OCI-LY7 (cell line): ENCODE measurements at regions of chr11 and their contacts with region 1.

Region 1: GRCh38 chr11:82775736-82776346 is 42.2 kb upstream of the FAM181B start:
- DNase-seq: peak; percentile 51
- H3K4me3 ChIP-seq: no peak overlapping the region
- H3K27ac ChIP-seq: no peak overlapping the region
- H3K4me1 ChIP-seq: no peaks in the 10 kb centered on the region
- CTCF ChIP-seq: peak; percentile 86

Region 2: DNA sequence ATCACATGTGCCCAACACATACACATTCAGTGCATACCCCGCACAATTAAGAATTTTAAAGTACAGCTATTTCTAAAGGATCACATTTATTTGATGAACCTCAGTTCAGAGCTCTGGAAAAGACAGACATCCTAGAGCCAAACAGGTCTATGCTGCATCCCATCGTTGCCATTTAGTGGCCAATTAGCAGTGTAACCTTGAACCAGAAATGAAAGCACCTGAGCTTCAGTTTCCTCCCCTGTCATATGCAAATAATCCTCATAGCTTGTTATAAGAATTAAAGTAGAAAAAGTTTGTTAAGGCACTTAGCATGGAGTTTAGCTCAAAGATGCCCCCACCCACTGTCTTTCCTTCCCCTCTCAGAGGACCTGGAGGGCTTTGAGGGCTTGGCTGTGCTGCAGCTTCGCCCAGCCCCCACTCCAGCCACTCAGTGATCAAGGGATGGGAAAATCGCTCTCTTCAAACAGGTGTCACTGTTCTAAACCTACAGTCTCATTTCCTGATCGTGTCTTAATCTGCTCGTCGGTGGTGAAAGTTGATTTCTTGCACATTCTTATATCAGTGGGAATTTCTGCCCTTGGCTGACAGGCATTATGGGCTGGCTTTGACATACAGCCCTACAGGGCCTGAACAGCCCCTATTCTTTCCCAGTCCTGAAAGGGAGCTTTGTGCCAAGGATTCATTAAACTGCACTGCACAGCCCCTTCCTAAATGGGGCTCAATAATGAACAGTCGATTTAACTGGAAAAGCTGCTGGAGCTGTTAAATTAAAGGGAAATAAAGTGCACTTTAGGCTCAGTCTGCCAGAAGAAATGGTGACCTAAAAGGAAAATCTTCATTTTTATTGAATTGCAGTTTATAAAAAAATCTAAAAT is 18.8 kb before region 1 on chr11:
- CTCF ChIA-PET with region 1: no interaction called
- POLR2A ChIA-PET with region 1: no interaction called
- intact Hi-C with region 1: no loop called
- DNase-seq: peak; percentile 3
- H3K4me3 ChIP-seq: no peak overlapping the region
- H3K27ac ChIP-seq: no peak overlapping the region
- H3K4me1 ChIP-seq: peaks cover 8% of the 10 kb centered on the region
- CTCF ChIP-seq: no peak

Region 3: DNA sequence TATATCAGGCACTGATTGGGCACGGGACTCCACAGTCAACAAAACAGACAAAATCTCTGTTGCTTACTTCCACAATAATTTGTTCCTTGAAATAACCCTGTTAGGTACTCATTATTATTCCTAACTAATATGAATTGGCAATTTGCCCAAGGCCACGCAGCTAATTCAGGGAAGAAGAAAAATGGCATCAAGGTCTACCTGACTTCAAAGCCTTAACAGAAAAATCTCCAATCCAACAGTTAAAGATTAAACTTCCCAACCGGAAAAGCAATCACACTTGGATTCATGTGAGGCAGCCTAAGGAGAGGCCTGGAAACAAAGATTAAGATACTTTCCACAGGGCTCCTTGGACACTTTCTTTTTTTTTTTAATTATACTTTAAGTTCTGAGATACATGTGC is 55.5 kb after region 1 on chr11:
- CTCF ChIA-PET with region 1: no interaction called
- POLR2A ChIA-PET with region 1: no interaction called
- intact Hi-C with region 1: loop called (anchors 5 kb)
- DNase-seq: no peak
- H3K4me3 ChIP-seq: no peak overlapping the region
- H3K27ac ChIP-seq: no peak overlapping the region
- H3K4me1 ChIP-seq: no peaks in the 10 kb centered on the region
- CTCF ChIP-seq: no peak

Region 4: DNA sequence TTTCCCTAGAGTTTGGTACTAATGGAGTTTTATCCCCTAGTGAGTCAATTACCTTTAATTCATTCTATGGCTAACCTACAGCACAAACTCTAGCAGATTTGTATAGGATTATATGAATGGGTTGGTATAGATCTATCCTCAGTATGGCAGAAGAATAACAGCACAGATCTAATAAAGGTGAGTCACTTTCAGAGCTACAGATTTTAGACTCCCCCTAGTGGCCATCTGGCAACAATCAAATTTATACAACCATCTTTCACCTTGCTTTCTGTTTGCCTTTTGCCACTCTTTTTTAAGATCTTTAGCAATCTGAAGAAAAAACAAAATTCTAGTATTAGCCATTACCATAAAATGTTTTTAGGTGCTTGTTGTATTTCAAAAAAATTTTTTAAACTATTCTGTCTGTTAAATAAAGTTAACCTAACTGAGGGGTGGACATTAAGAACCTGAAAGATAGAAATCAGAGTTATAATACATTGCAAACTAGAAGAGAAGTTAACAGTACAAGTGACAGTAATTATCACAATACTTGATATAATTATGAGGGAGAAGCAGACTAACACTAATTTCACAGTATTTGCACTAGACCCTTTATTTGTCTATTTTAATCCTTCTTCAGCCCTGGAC is 151.5 kb after region 1 on chr11:
- CTCF ChIA-PET with region 1: no interaction called
- POLR2A ChIA-PET with region 1: no interaction called
- intact Hi-C with region 1: no loop called
- DNase-seq: peak; percentile 84
- H3K4me3 ChIP-seq: no peak overlapping the region
- H3K27ac ChIP-seq: peak overlapping the region; percentile 64
- H3K4me1 ChIP-seq: peaks cover 74% of the 10 kb centered on the region
- CTCF ChIP-seq: peak; percentile 99